ENCODE measurements at regions of chr22 and their contacts with region 1.

Region 1: GRCh38 chr22:43993027-43993760 is 30.9 kb upstream of the PARVB start:
- DNase-seq: peak; percentile 37 to 81 (median 50)
- ATAC-seq: peak; percentile 85
- H3K4me3 ChIP-seq: no peak overlapping the region
- H3K4me3 Mint-ChIP-seq: peak overlapping the region; percentile 74
- H3K27ac ChIP-seq: no peak overlapping the region
- H3K27ac Mint-ChIP-seq: peak overlapping the region; percentile 80
- H3K4me1 ChIP-seq: peaks cover 29% of the 10 kb centered on the region
- H3K4me1 Mint-ChIP-seq: peaks cover 35% of the 10 kb centered on the region
- H3K27me3 ChIP-seq: no peaks in the 10 kb centered on the region
- H3K27me3 Mint-ChIP-seq: no peaks in the 10 kb centered on the region
- CTCF ChIP-seq: peak; percentile 95

Region 2: GRCh38 chr22:44049486-44050231 is 56.5 kb after region 1 on chr22:
- CTCF ChIA-PET with region 1: no interaction called
- POLR2A ChIA-PET with region 1: no interaction called
- intact Hi-C with region 1: no loop called
- DNase-seq: no peak
- ATAC-seq: no peak
- H3K4me3 ChIP-seq: no peak overlapping the region
- H3K4me3 Mint-ChIP-seq: peak overlapping the region; percentile 38
- H3K27ac ChIP-seq: no peak overlapping the region
- H3K27ac Mint-ChIP-seq: no peak overlapping the region
- H3K4me1 ChIP-seq: peaks cover 25% of the 10 kb centered on the region
- H3K4me1 Mint-ChIP-seq: peaks cover 19% of the 10 kb centered on the region
- H3K27me3 ChIP-seq: no peaks in the 10 kb centered on the region
- H3K27me3 Mint-ChIP-seq: peaks cover 5% of the 10 kb centered on the region
- CTCF ChIP-seq: no peak

Region 3: GRCh38 chr22:44080936-44081861 is 88.0 kb after region 1 on chr22:
- CTCF ChIA-PET with region 1: interaction called, 15 read pairs
- POLR2A ChIA-PET with region 1: interaction called, 4 read pairs
- intact Hi-C with region 1: loop called (anchors 1 to 2 kb)
- DNase-seq: peak; percentile 52 to 82 (median 64)
- ATAC-seq: peak; percentile 55
- H3K4me3 ChIP-seq: no peak overlapping the region
- H3K4me3 Mint-ChIP-seq: no peak overlapping the region
- H3K27ac ChIP-seq: no peak overlapping the region
- H3K27ac Mint-ChIP-seq: no peak overlapping the region
- H3K4me1 ChIP-seq: peaks cover 5% of the 10 kb centered on the region
- H3K4me1 Mint-ChIP-seq: no peaks in the 10 kb centered on the region
- H3K27me3 ChIP-seq: no peaks in the 10 kb centered on the region
- H3K27me3 Mint-ChIP-seq: no peaks in the 10 kb centered on the region
- CTCF ChIP-seq: peak; percentile 88

Region 4: DNA sequence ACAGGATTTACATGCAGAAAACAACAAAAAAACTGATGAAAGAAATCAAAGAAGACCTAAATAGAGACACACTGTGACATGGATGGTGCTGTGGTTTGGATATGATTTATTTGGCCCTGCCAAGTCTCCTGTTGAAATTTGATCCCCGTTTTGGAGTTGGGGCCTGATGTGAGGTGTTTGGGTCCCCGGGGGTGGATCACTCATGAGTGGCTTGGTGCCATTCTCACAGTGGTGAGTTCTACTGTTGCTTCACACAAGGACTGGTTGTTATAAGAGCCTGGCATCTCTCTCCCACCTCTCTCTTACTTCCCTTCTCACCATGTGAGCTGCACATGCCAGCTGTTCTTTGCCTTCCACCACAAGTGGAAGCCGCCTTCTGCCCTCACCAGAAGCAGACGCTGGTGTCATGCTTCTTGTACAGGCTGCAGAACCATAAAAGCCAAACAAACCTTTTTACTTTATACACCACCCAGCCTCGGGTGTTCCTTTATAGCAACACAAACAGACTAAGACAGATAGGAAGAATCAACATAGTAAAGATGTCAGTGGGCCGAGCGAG is 512.7 kb after region 1 on chr22:
- CTCF ChIA-PET with region 1: no interaction called
- POLR2A ChIA-PET with region 1: no interaction called
- intact Hi-C with region 1: loop called in 1 of 2 experiments (anchors 10 kb)
- DNase-seq: no peak
- ATAC-seq: peak; percentile 29
- H3K4me3 ChIP-seq: no peak overlapping the region
- H3K4me3 Mint-ChIP-seq: no peak overlapping the region
- H3K27ac ChIP-seq: no peak overlapping the region
- H3K27ac Mint-ChIP-seq: peak overlapping the region; percentile 21
- H3K4me1 ChIP-seq: peaks cover 8% of the 10 kb centered on the region
- H3K4me1 Mint-ChIP-seq: peaks cover 11% of the 10 kb centered on the region
- H3K27me3 ChIP-seq: peaks cover 0 to 16% of the 10 kb centered on the region in 2 experiments
- H3K27me3 Mint-ChIP-seq: peaks cover 7% of the 10 kb centered on the region
- CTCF ChIP-seq: no peak

Region 5: GRCh38 chr22:44625981-44626687 is 632.9 kb after region 1 on chr22:
- CTCF ChIA-PET with region 1: interaction called, 24 read pairs
- POLR2A ChIA-PET with region 1: no interaction called
- intact Hi-C with region 1: loop called in 1 of 2 experiments (anchors 1 kb)
- DNase-seq: peak; percentile 68 to 90 (median 78)
- ATAC-seq: peak; percentile 91
- H3K4me3 ChIP-seq: no peak overlapping the region
- H3K4me3 Mint-ChIP-seq: no peak overlapping the region
- H3K27ac ChIP-seq: no peak overlapping the region
- H3K27ac Mint-ChIP-seq: no peak overlapping the region
- H3K4me1 ChIP-seq: peaks cover 18% of the 10 kb centered on the region
- H3K4me1 Mint-ChIP-seq: no peaks in the 10 kb centered on the region
- H3K27me3 ChIP-seq: no peaks in the 10 kb centered on the region
- H3K27me3 Mint-ChIP-seq: no peaks in the 10 kb centered on the region
- CTCF ChIP-seq: peak; percentile 96

Measured in CD4-positive, alpha-beta T cell (primary cell).